Activated T-helper 2 cell treated with anti-CD3 and anti-CD28 coated beads, Interferon-gamma antibody, Interleukin-2, Interleukin-4, amounts not matched to agents 10 μg/mL and 5 μg/mL and 100 μg/mL, durations not matched to agents 14 hours and 24 hours and 36 hours (primary cell): ENCODE measurements at regions of chr4 and their contacts with region 1.

Region 1: DNA sequence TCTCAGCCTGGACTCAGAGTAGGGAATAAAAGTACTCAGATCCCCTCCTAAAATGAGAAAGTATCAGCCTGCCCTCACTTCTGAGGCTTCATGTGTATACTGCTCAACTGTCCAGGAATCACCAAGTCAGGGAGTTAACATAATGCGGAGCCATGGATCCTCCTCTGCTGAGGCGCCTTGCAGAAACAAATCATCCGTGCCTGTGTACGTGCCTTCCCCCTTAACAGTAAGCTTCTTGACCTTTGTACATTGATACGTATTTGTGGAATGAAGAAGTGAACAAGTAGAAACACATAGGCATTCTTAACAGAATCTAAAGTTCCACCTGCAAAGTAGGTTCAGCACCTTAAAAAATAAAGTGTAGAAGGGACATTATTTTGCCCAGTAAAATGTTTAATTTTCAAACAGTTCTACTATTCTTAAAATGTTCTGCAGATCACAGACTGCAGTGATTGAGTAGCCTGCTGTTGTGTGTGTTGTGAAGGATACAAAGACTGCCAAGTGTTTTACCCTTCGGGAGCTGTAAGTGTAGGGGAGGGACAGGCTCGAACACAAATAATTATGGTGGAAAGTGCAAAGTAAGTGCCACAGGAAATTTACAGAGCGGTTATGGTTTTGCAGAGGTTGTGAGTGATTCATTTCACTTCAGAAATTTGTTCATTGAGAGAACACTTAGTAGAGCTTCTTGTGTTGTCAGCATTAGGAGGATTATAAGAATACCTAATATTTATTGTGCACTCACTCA is 61.9 kb downstream of the ARHGAP10 start:
- DNase-seq: no peak
- H3K4me3 Mint-ChIP-seq: peak overlapping the region; percentile 40
- H3K27ac Mint-ChIP-seq: peak overlapping the region; percentile 95
- H3K4me1 Mint-ChIP-seq: peaks cover 56% of the 10 kb centered on the region
- H3K27me3 Mint-ChIP-seq: no peaks in the 10 kb centered on the region

Region 2: DNA sequence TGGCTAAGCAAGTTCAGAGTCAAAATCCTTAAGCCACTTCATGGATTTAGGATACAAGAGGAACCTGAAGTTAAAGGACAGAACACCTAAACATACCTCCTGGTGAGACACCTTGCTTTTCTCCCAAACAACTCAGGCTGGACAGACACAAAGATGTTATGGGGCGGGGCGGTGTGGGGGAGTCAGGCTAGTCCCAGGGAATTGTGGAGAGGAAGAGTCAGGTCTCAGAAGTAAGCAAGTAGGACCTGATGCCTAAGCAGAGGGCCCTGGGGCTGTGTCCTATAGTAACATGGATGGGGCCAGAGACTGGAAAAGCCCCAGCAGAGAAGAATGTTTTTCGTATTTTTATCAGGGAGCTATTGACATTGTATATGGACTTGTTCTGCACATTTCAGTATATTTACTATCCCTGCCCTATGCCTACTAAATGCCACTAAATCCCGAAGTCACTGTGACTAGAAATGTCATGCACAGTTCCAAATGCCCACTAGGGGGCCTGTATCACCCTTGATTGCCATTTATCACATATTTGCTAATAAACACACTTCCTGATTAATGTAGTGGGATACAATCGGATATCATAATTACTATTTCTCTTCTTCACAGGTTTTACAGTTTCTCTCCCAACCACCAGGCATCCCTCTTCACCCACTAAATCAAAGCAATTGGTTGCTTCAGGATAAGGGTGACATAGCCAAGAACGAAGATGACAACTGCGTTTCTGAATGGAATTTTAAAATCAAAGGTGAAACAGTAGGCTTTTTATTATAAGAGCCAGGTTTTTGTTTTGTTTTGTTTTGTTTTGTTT is 85.7 kb before region 1 on chr4:
- intact Hi-C with region 1: loop called (anchors 1 kb)
- DNase-seq: no peak
- H3K4me3 Mint-ChIP-seq: no peak overlapping the region
- H3K27ac Mint-ChIP-seq: no peak overlapping the region
- H3K4me1 Mint-ChIP-seq: peaks cover 8% of the 10 kb centered on the region
- H3K27me3 Mint-ChIP-seq: peaks cover 6% of the 10 kb centered on the region

Region 3: DNA sequence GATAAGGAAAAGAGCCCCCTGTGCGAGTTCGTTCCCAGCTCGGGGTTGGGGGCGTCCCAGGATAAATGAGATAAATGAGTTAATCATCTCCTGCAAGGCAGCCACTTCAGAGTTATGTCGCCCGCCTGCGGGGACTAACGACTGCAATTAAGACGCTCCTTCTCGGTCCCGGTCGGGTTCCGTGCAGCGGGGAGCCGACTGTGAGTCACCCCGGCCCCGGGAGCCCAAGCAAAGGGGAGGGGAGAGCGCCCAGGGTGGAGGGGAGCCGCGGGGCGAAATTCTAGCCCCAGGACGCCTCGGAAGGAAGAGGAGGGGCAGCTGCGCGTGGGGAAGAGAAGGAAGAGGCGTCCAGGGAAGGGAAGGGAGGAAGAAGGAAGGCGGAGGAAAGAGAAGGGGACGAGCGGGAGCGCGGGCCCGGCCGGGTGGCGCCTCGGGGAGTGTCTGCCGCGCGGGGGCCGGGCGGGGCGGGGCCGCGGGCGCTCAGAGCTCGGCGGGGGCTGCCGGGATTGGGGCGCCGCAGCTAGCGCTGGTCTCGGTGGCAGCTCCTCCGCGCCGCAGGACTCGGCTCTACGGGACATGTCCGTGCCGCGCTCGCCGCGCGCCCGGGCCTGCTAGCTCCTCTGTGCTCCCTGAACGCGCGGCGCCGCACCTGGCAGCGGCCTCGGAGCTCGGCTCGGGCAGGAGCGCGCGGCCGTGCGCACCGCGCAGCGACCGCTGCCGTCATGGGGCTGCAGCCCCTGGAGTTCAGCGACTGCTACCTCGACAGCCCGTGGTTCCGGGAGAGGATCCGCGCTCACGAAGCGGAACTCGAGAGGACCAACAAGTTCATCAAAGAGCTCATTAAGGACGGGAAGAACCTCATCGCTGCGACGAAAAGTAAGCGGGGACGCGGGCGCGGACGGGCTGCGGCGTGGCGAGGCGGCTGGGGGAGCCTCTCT is 61.9 kb before region 1 on chr4 and contains the start of gene ARHGAP10:
- intact Hi-C with region 1: loop called (anchors 1 kb)
- DNase-seq: peak; percentile 59
- H3K4me3 Mint-ChIP-seq: peak within 1 kb of the TSS; percentile 96
- H3K27ac Mint-ChIP-seq: peak within 1 kb of the TSS; percentile 91
- H3K4me1 Mint-ChIP-seq: peaks cover 44% of the 10 kb centered on the region
- H3K27me3 Mint-ChIP-seq: peaks cover 18% of the 10 kb centered on the region
- total RNA-seq, gene ARHGAP10: 18.5 TPM in 2 replicates

Region 4: DNA sequence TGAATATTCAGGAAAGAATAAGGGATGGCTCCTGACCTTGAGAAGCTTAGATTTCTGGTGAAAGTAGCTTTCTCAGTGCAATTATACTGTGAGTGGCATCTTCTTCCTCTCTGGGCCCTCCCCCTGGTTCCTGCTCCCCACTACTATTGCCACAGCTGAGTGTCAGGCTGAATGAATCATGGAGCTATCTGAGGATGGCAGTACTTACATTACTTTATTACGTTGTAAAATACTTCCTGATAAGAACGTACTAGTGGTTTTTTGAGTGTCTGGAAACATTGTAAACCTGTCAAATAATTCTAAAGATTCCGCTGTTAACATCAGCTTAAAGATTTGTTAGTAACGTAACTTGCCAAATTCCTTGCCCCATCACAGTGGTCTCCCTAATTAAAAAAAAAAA is 25.6 kb before region 1 on chr4:
- intact Hi-C with region 1: loop called (anchors 2 kb)
- DNase-seq: no peak
- H3K4me3 Mint-ChIP-seq: no peak overlapping the region
- H3K27ac Mint-ChIP-seq: no peak overlapping the region
- H3K4me1 Mint-ChIP-seq: peaks cover 26% of the 10 kb centered on the region
- H3K27me3 Mint-ChIP-seq: no peaks in the 10 kb centered on the region

Region 5: GRCh38 chr4:147782087-147782781 is 11.5 kb before region 1 on chr4:
- intact Hi-C with region 1: loop called (anchors 1 kb)
- DNase-seq: no peak
- H3K4me3 Mint-ChIP-seq: no peak overlapping the region
- H3K27ac Mint-ChIP-seq: peak overlapping the region; percentile 31
- H3K4me1 Mint-ChIP-seq: peaks cover 61% of the 10 kb centered on the region
- H3K27me3 Mint-ChIP-seq: no peaks in the 10 kb centered on the region

Region 6: GRCh38 chr4:147846318-147847155 is 52.8 kb after region 1 on chr4:
- intact Hi-C with region 1: loop called (anchors 1 kb)
- DNase-seq: no peak
- H3K4me3 Mint-ChIP-seq: no peak overlapping the region
- H3K27ac Mint-ChIP-seq: no peak overlapping the region
- H3K4me1 Mint-ChIP-seq: peaks cover 16% of the 10 kb centered on the region
- H3K27me3 Mint-ChIP-seq: no peaks in the 10 kb centered on the region